Heart left ventricle (tissue), 16 donors: ENCODE measurements at regions of chr5 and their contacts with region 1.

Region 1: GRCh38 chr5:158695595-158696330 is 404.0 kb downstream of the EBF1 start:
- DNase-seq: peak; percentile 67 to 83 (median 72)
- ATAC-seq: peak; percentile 57 to 91 (median 82)
- H3K4me3 ChIP-seq: no peak overlapping the region
- H3K27ac ChIP-seq: peak overlapping the region in 8 of 12 donors; percentile 14 to 58 (median 40)
- H3K4me1 ChIP-seq: peaks cover 0 to 66% (median 6%) of the 10 kb centered on the region in 12 donors
- H3K27me3 ChIP-seq: peaks cover 0 to 9% (median 0%) of the 10 kb centered on the region in 9 donors
- CTCF ChIP-seq: peak; percentile 89 to 99 (median 97)
- POLR2A ChIP-seq: no peak

Region 2: DNA sequence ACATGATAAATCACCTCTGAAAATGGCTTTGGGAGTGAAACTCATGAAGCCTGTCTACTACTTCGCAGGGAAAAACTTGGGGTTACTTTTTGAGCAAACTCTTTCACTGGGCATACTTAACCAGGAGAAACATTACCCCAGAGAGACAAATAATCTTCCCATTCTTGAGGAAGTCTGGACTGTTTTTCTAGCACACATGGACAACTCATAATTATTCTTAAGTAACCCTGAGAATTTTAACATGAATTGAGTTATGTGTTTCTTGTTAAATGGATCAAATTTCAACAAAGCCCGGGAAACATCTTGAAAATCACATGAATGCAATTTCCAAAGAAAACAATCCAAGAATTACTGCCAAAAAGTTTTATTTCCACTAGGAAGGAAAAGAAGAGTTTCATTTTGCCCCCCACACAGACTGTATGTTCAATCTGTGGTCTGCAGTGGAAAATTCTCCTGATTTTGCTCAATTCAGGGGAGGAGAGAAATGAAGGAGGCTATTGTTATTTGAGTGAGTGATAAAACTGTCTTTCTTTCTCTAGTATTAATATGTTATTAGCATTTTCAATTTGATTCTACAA is 272.1 kb before region 1 on chr5:
- intact Hi-C with region 1: loop called in 1 of 10 experiments (anchors 10 kb)
- DNase-seq: no peak
- ATAC-seq: peak in 2 of 4 donors; percentile 47 to 68
- H3K4me3 ChIP-seq: no peak overlapping the region
- H3K27ac ChIP-seq: peak overlapping the region; percentile 18 to 91 (median 78)
- H3K4me1 ChIP-seq: peaks cover 0 to 37% (median 13%) of the 10 kb centered on the region in 12 donors
- H3K27me3 ChIP-seq: no peaks in the 10 kb centered on the region
- CTCF ChIP-seq: no peak
- POLR2A ChIP-seq: no peak

Region 3: DNA sequence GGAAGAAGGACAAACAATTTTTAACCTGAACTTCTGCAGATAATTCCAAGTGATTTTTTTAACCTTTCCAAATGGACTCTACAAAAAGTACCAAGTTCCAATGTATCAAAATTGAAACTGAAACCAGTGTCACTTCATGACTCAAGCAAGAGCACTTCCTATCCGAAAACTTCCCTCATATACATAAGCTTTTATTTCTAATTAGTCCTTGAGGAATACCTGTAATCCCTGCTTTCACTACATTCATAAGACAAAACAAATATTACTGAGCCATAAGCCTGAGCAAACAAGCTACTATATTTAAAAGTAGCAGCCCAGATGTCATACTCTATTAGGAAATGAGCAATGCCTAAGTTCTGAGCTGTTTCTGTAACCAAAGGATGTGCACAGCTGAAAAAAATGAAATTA is 179.5 kb after region 1 on chr5:
- intact Hi-C with region 1: loop called in 1 of 10 experiments (anchors 10 kb)
- DNase-seq: no peak
- ATAC-seq: peak in 2 of 4 donors; percentile 62 to 67
- H3K4me3 ChIP-seq: peak overlapping the region in 10 of 12 donors; percentile 10 to 42 (median 22)
- H3K27ac ChIP-seq: peak overlapping the region in 11 of 12 donors; percentile 33 to 78 (median 69)
- H3K4me1 ChIP-seq: peaks cover 0 to 65% (median 29%) of the 10 kb centered on the region in 12 donors
- H3K27me3 ChIP-seq: no peaks in the 10 kb centered on the region
- CTCF ChIP-seq: no peak
- POLR2A ChIP-seq: no peak

Region 4: DNA sequence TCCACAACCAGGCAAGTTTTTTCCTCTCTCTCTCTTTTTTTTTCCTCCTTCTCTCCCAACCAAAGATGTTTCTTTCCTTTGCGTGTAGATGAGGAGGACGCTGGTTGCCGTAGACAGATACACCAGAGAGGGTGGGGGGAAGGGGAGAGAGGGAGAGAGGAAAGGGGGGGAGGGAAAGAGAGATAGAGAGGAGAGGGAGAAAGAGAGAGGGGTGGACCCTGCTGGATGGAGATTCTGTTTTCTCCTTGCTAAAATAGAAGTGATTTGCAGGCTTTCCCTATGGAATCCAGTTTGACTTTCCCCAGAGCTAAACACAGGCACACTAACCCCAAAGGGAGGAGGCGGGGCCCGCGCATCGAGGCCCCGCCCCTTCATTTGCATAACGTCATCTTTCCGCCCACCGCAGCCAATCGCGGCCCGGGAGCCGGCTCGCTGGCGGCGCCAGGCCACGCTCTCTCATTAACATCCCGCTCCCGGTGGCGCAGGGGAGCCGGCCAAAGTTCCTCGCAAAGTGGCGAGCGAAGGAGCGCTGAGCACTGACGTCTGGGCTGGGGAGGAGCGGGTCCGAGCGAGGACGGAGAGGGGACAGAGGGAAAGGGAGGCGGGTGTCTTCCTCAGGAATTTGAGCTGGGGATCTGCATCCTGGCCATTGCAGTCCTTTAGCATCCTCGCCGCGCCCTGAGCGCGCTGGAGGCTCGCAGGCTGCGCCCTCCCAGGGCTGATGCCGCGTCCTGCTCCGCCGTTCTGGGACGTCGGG is 404.4 kb after region 1 on chr5:
- intact Hi-C with region 1: loop called in 1 of 10 experiments (anchors 2 kb)
- DNase-seq: peak; percentile 92 to 95 (median 93)
- ATAC-seq: peak; percentile 86 to 93 (median 90)
- H3K4me3 ChIP-seq: peak overlapping the region; percentile 50 to 87 (median 72)
- H3K27ac ChIP-seq: peak overlapping the region; percentile 81 to 95 (median 92)
- H3K4me1 ChIP-seq: peaks cover 0 to 56% (median 23%) of the 10 kb centered on the region in 12 donors
- H3K27me3 ChIP-seq: peaks cover 0 to 74% (median 15%) of the 10 kb centered on the region in 9 donors
- CTCF ChIP-seq: peak in 2 of 12 donors; percentile 14 to 19
- POLR2A ChIP-seq: peak; percentile 76 to 99

Region 5: DNA sequence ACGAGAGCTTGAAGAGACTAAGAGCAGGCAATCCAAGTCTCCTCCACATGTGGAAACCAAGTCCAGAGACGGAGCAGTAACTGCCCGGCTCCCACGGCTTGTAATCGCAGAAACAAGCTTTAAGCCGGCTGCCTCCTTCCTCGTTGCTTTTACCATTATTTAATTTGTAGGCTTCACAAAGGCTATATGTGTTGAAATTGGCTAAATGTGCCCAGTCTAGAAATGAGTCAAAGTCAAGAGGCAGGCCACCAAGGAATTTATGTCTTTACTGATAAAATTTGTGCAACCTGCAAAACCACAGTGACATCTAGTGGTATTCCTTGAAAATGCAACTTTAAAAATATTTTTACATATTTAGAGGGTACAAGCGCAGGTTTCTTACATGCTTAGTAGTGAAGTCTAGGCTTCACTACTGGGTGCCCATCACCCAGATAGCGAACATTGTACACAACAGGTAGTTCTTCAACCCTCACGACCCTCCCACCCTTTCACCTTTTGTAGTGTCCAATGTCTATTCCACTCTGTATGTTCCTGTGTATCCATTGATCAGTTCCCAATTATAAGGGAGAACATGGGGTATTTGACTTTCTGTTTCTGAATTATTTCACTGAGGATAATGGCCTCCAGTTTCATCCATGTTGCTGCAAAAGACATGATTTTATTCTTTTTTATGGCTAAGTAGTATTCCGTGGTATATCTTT is 437.4 kb after region 1 on chr5:
- intact Hi-C with region 1: loop called in 2 of 10 experiments (anchors 1 to 10 kb)
- DNase-seq: no peak
- ATAC-seq: peak in 3 of 4 donors; percentile 44 to 78 (median 58)
- H3K4me3 ChIP-seq: peak overlapping the region in 8 of 12 donors; percentile 6 to 41 (median 28)
- H3K27ac ChIP-seq: peak overlapping the region in 1 of 12 donors; percentile 25
- H3K4me1 ChIP-seq: peaks cover 0 to 8% (median 0%) of the 10 kb centered on the region in 12 donors
- H3K27me3 ChIP-seq: peaks cover 0 to 7% (median 0%) of the 10 kb centered on the region in 9 donors
- CTCF ChIP-seq: peak; percentile 74 to 88 (median 82)
- POLR2A ChIP-seq: no peak